CD4-positive, alpha-beta memory T cell (primary cell): ENCODE measurements at regions of chr5 and their contacts with region 1.

Region 1: DNA sequence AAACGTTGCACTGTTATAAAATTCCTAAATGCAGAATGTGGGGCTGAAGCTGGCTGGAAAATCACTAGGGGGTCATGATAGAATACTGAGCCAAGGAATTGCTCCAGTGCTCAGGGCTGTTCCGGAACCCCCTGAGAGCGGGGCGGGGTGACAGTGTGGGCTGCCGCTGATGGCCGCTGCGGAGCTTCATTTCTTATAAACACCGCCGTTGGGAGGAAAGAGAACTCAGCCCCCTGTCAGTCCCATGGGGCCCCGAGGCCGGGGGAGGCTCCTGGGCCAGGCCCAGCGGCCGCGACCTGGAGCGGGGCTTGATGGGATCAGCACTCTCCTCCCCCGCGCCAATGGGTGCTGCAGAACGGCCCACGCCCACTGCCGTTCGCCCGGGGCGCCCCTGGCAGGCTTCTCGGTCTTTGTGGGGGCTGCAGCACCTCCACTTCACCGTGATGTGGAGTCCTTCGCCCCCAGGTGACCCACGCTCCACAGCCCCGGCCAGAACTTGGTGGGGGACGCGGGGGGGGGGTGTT is 5.2 kb upstream of the IRF1 start:
- DNase-seq: peak; percentile 52 to 76 (median 60)
- H3K4me3 ChIP-seq: peak overlapping the region; percentile 25 to 61
- H3K4me3 Mint-ChIP-seq: peak overlapping the region; percentile 93 to 99 (median 96)
- H3K27ac ChIP-seq: peak overlapping the region; percentile 99
- H3K27ac Mint-ChIP-seq: peak overlapping the region; percentile 95 to 99 (median 98)
- H3K4me1 ChIP-seq: peaks cover 83% of the 10 kb centered on the region
- H3K4me1 Mint-ChIP-seq: peaks cover 41 to 92% (median 66%) of the 10 kb centered on the region in 4 donors
- H3K27me3 ChIP-seq: no peaks in the 10 kb centered on the region
- H3K27me3 Mint-ChIP-seq: no peaks in the 10 kb centered on the region

Region 2: GRCh38 chr5:132369474-132370180 is 126.1 kb before region 1 on chr5 and contains the start of gene SLC22A5:
- CTCF ChIA-PET with region 1: interaction called, 9 read pairs
- POLR2A ChIA-PET with region 1: interaction called, 30 read pairs
- intact Hi-C with region 1: no loop called
- DNase-seq: peak; percentile 67 to 77 (median 72)
- H3K4me3 ChIP-seq: peak within 1 kb of the TSS; percentile 20 to 72
- H3K4me3 Mint-ChIP-seq: peak within 1 kb of the TSS; percentile 83 to 91 (median 87)
- H3K27ac ChIP-seq: peak within 1 kb of the TSS; percentile 74
- H3K27ac Mint-ChIP-seq: peak within 1 kb of the TSS; percentile 70 to 93 (median 88)
- H3K4me1 ChIP-seq: peaks cover 31% of the 10 kb centered on the region
- H3K4me1 Mint-ChIP-seq: peaks cover 13 to 32% (median 26%) of the 10 kb centered on the region in 4 donors
- H3K27me3 ChIP-seq: no peaks in the 10 kb centered on the region
- H3K27me3 Mint-ChIP-seq: no peaks in the 10 kb centered on the region
- total RNA-seq, gene SLC22A5: 8.9 to 10.0 TPM

Region 3: GRCh38 chr5:132419502-132420468 is 75.9 kb before region 1 on chr5:
- CTCF ChIA-PET with region 1: interaction called, 94 read pairs
- POLR2A ChIA-PET with region 1: interaction called, 565 read pairs
- intact Hi-C with region 1: loop called (anchors 1 kb)
- DNase-seq: peak; percentile 57 to 69 (median 64)
- H3K4me3 ChIP-seq: peak overlapping the region; percentile 38 to 51
- H3K4me3 Mint-ChIP-seq: peak overlapping the region; percentile 75 to 93 (median 80)
- H3K27ac ChIP-seq: peak overlapping the region; percentile 71
- H3K27ac Mint-ChIP-seq: peak overlapping the region; percentile 96 to 99 (median 97)
- H3K4me1 ChIP-seq: peaks cover 100% of the 10 kb centered on the region
- H3K4me1 Mint-ChIP-seq: peaks cover 76 to 98% (median 86%) of the 10 kb centered on the region in 4 donors
- H3K27me3 ChIP-seq: no peaks in the 10 kb centered on the region
- H3K27me3 Mint-ChIP-seq: no peaks in the 10 kb centered on the region

Region 4: GRCh38 chr5:132437604-132438266 is 58.0 kb before region 1 on chr5:
- CTCF ChIA-PET with region 1: interaction called, 11 read pairs
- POLR2A ChIA-PET with region 1: interaction called, 565 read pairs
- intact Hi-C with region 1: no loop called
- DNase-seq: peak; percentile 49 to 75 (median 52)
- H3K4me3 ChIP-seq: peak overlapping the region; percentile 4 to 8
- H3K4me3 Mint-ChIP-seq: peak overlapping the region; percentile 52 to 85 (median 70)
- H3K27ac ChIP-seq: peak overlapping the region; percentile 60
- H3K27ac Mint-ChIP-seq: peak overlapping the region; percentile 89 to 96 (median 92)
- H3K4me1 ChIP-seq: peaks cover 99% of the 10 kb centered on the region
- H3K4me1 Mint-ChIP-seq: peaks cover 64 to 97% (median 83%) of the 10 kb centered on the region in 4 donors
- H3K27me3 ChIP-seq: no peaks in the 10 kb centered on the region
- H3K27me3 Mint-ChIP-seq: no peaks in the 10 kb centered on the region

Region 5: GRCh38 chr5:132456296-132457001 is 39.3 kb before region 1 on chr5:
- CTCF ChIA-PET with region 1: interaction called, 90 read pairs
- POLR2A ChIA-PET with region 1: interaction called, 1,580 read pairs
- intact Hi-C with region 1: loop called (anchors 1 kb)
- DNase-seq: peak; percentile 76 to 87 (median 79)
- H3K4me3 ChIP-seq: peak overlapping the region; percentile 41 to 48
- H3K4me3 Mint-ChIP-seq: peak overlapping the region; percentile 73 to 89 (median 82)
- H3K27ac ChIP-seq: peak overlapping the region; percentile 77
- H3K27ac Mint-ChIP-seq: peak overlapping the region; percentile 97 to 100 (median 100)
- H3K4me1 ChIP-seq: peaks cover 100% of the 10 kb centered on the region
- H3K4me1 Mint-ChIP-seq: peaks cover 82 to 95% (median 90%) of the 10 kb centered on the region in 4 donors
- H3K27me3 ChIP-seq: no peaks in the 10 kb centered on the region
- H3K27me3 Mint-ChIP-seq: no peaks in the 10 kb centered on the region

Region 6: GRCh38 chr5:132736853-132737833 is 241.4 kb after region 1 on chr5 and contains the start of gene KIF3A:
- CTCF ChIA-PET with region 1: interaction called, 4 read pairs
- POLR2A ChIA-PET with region 1: interaction called, 7 read pairs
- intact Hi-C with region 1: loop called (anchors 1 kb)
- DNase-seq: peak; percentile 98
- H3K4me3 ChIP-seq: peak within 1 kb of the TSS; percentile 63 to 79
- H3K4me3 Mint-ChIP-seq: peak within 1 kb of the TSS; percentile 91 to 98 (median 94)
- H3K27ac ChIP-seq: peak within 1 kb of the TSS; percentile 68
- H3K27ac Mint-ChIP-seq: peak within 1 kb of the TSS; percentile 93 to 95 (median 94)
- H3K4me1 ChIP-seq: peaks cover 20% of the 10 kb centered on the region
- H3K4me1 Mint-ChIP-seq: peaks cover 28 to 31% (median 30%) of the 10 kb centered on the region in 4 donors
- H3K27me3 ChIP-seq: no peaks in the 10 kb centered on the region
- H3K27me3 Mint-ChIP-seq: no peaks in the 10 kb centered on the region
- total RNA-seq, gene KIF3A: 18.7 to 25.9 TPM

Region 7: GRCh38 chr5:132807163-132807838 is 311.6 kb after region 1 on chr5:
- CTCF ChIA-PET with region 1: no interaction called
- POLR2A ChIA-PET with region 1: no interaction called
- intact Hi-C with region 1: no loop called
- DNase-seq: no peak
- H3K4me3 ChIP-seq: no peak overlapping the region
- H3K4me3 Mint-ChIP-seq: no peak overlapping the region
- H3K27ac ChIP-seq: no peak overlapping the region
- H3K27ac Mint-ChIP-seq: peak overlapping the region in 1 of 7 donors; percentile 57
- H3K4me1 ChIP-seq: peaks cover 2% of the 10 kb centered on the region
- H3K4me1 Mint-ChIP-seq: peaks cover under 1 to 3% (median 2%) of the 10 kb centered on the region in 4 donors
- H3K27me3 ChIP-seq: peaks cover 17% of the 10 kb centered on the region
- H3K27me3 Mint-ChIP-seq: peaks cover 32 to 57% of the 10 kb centered on the region in 2 donors